Activated T-helper 1 cell treated with anti-CD3 and anti-CD28 coated beads, Interleukin-12 subunit alpha, Interleukin-12 subunit beta, Interleukin-2, Interleukin-4 antibody, amounts not matched to agents 30 ng/mL and 10 ng/mL and 1 ng/mL, durations not matched to agents 14 hours and 24 hours and 36 hours (primary cell): ENCODE measurements at regions of chr11 and their contacts with region 1.

Region 1: DNA sequence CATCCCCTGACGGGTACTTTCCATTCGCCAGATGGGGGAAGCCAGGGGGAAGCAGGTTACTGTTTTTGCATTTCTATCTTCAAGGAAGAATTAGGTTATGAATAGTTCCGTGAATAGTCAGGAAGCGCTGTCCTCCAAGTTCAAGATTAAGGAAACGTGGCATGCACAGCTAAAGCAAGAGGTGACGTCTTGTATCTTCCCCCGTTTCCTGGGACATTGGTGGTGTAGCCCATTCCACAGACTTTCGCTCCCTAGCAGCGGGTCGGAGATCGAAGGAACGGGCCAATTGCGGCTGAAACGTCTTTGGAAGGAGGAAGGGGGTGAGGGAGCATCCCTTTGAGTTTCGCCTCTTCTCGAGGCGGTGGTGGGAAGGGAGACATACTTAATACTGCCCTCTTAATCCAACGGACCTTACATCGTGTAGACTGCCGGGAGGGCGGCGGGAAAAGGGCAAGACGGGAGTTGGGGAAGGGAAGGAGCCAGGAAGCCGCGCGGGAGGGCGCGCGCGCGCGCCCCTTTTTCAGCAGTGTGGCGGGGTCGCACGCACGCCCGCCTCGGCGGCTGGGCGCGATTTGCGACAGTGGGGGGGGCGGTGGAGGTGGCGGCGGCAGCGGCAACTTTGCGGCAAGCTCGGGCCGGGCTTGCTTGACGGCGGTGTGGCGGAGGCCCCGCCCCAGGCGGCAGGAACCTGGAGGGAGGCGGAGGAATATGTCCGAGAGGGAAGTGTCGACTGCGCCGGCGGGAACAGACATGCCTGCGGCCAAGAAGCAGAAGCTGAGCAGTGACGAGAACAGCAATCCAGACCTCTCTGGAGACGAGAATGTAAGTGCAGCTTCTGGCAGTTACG is at the start of gene EED:
- DNase-seq: peak; percentile 93
- H3K4me3 Mint-ChIP-seq: no peak within 1 kb of the TSS
- H3K27ac Mint-ChIP-seq: no peak within 1 kb of the TSS
- H3K4me1 Mint-ChIP-seq: peaks cover 43% of the 10 kb centered on the region
- H3K27me3 Mint-ChIP-seq: no peaks in the 10 kb centered on the region
- total RNA-seq, gene EED: 279 and 294 TPM in 2 replicates

Region 2: DNA sequence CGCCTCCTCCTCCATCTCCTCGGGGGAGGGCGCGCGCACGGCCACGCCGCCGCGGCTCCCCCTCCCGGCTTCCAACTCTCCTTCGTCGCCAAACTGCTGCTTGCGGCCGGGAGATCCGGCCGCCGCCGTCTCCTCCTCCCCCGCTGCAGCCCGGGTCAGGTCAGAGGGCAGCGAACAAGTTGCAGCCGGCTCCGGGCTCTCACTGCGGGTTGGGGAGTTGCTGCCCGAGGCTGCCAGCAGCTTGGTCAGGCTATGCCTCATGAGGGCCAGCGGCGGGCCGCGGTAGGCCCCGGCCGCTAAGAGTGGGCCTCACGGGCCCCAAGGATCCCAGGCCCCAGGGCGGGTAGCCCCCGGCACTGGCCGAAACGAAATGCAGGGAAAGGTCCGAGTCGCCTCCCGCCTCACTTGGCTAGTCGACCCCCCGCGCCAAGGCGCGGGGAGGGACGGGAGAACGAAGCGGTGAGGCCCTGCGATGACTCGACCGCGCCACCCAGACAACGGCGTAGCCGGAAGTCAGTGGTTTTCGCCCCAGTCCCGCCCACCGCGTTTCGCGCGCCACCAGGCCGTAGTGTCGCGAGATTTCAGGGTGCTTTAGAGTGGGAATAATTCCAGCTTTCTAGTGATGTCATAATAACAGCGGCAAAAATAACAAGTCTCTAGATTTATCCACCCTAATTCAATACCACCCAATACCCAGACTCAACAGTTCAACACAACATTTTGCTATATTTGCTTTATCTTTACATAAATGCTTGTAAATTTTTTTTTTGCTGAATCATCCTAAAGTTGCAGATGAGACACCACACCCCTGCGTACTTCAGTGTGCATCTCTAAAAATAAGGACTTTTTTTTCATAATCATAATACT is 579.9 kb before region 1 on chr11 and contains the start of gene CREBZF:
- intact Hi-C with region 1: loop called (anchors 1 kb)
- DNase-seq: peak; percentile 94
- H3K4me3 Mint-ChIP-seq: peak within 1 kb of the TSS; percentile 99
- H3K27ac Mint-ChIP-seq: peak within 1 kb of the TSS; percentile 97
- H3K4me1 Mint-ChIP-seq: peaks cover 51% of the 10 kb centered on the region
- H3K27me3 Mint-ChIP-seq: no peaks in the 10 kb centered on the region
- total RNA-seq, gene CREBZF: 52.0 and 55.9 TPM in 2 replicates

Region 3: GRCh38 chr11:85737748-85738147 is 507.0 kb before region 1 on chr11:
- intact Hi-C with region 1: no loop called
- DNase-seq: no peak
- H3K4me3 Mint-ChIP-seq: no peak overlapping the region
- H3K27ac Mint-ChIP-seq: no peak overlapping the region
- H3K4me1 Mint-ChIP-seq: peaks cover 35% of the 10 kb centered on the region
- H3K27me3 Mint-ChIP-seq: peaks cover 3% of the 10 kb centered on the region

Region 4: GRCh38 chr11:86047275-86047991 is 197.3 kb before region 1 on chr11:
- intact Hi-C with region 1: loop called (anchors 1 kb)
- DNase-seq: no peak
- H3K4me3 Mint-ChIP-seq: peak overlapping the region; percentile 69
- H3K27ac Mint-ChIP-seq: peak overlapping the region; percentile 91
- H3K4me1 Mint-ChIP-seq: peaks cover 88% of the 10 kb centered on the region
- H3K27me3 Mint-ChIP-seq: no peaks in the 10 kb centered on the region

Region 5: DNA sequence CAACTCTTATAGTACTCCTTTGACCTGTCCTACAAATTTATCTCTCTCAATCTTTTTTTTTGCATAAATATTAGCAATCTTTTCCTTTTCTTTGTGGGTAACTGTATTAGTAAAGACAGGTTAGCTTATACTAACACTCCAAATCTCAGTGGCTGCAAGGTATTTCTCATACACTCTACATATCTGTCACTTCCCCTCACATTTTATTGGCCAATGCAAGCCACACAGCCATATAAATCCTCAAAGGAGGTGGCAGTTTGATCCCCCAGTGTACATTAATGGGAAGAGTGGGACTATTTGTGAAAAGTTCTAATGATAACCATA is 42.8 kb before region 1 on chr11:
- intact Hi-C with region 1: loop called (anchors 1 kb)
- DNase-seq: no peak
- H3K4me3 Mint-ChIP-seq: no peak overlapping the region
- H3K27ac Mint-ChIP-seq: no peak overlapping the region
- H3K4me1 Mint-ChIP-seq: peaks cover 21% of the 10 kb centered on the region
- H3K27me3 Mint-ChIP-seq: no peaks in the 10 kb centered on the region

Region 6: GRCh38 chr11:86255896-86256295 is 11.2 kb after region 1 on chr11:
- intact Hi-C with region 1: loop called (anchors 1 kb)
- DNase-seq: no peak
- H3K4me3 Mint-ChIP-seq: peak overlapping the region; percentile 15
- H3K27ac Mint-ChIP-seq: peak overlapping the region; percentile 75
- H3K4me1 Mint-ChIP-seq: peaks cover 50% of the 10 kb centered on the region
- H3K27me3 Mint-ChIP-seq: no peaks in the 10 kb centered on the region

Region 7: GRCh38 chr11:86386746-86387145 is 142.0 kb after region 1 on chr11:
- intact Hi-C with region 1: no loop called
- DNase-seq: no peak
- H3K4me3 Mint-ChIP-seq: no peak overlapping the region
- H3K27ac Mint-ChIP-seq: no peak overlapping the region
- H3K4me1 Mint-ChIP-seq: no peaks in the 10 kb centered on the region
- H3K27me3 Mint-ChIP-seq: no peaks in the 10 kb centered on the region